Naive thymus-derived CD4-positive, alpha-beta T cell (primary cell): ENCODE measurements at regions of chr16 and their contacts with region 1.

Region 1: DNA sequence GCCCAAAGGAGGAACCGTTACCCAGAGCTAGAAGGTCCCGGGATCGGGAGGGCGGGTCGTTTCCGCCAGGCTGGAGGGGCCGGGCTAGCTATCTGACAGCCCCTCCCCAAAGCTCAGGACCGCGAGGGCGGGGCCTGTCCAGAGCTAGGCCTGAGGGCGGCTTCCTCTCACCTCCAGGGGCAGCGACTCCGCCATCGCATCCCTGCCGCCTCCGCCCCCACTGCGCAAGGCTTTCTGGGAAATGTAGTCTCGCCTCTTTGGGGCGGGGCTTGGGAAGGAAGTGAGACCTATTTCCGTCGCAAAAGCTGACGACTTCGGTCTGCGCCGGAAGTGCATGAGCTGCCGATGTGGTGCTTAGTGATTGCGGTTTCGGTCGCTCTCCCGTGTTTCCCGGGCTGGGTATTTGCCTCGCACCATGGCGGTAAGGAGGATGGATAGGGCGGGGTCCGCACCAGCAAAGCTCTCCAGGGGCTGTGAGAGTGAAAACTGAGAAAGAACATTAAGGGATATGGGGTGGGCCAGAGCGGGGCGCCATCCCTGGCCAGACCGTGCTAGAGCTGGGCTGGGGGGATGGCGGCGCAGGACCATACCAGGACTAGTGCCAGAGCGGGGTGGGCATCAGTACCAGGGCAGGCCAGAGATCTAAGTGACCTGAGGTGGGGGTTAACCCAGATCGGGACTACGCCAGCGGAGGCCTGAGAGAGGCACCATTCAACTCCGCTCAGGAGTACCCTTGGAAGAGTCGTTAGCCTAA is at the start of gene TMEM208:
- DNase-seq: peak; percentile 94 to 99 (median 97)
- ATAC-seq: peak; percentile 99
- H3K4me3 ChIP-seq: peak within 1 kb of the TSS; percentile 90
- H3K4me3 Mint-ChIP-seq: peak within 1 kb of the TSS; percentile 94 to 100 (median 98)
- H3K27ac ChIP-seq: peak within 1 kb of the TSS; percentile 85
- H3K27ac Mint-ChIP-seq: peak within 1 kb of the TSS; percentile 93 to 100 (median 99)
- H3K4me1 ChIP-seq: peaks cover 14 to 38% of the 10 kb centered on the region in 2 donors
- H3K4me1 Mint-ChIP-seq: peaks cover 37 to 62% (median 50%) of the 10 kb centered on the region in 7 donors
- H3K27me3 ChIP-seq: no peaks in the 10 kb centered on the region
- H3K27me3 Mint-ChIP-seq: no peaks in the 10 kb centered on the region
- total RNA-seq, gene TMEM208: 27.6 to 44.8 (median 32.7) TPM

Region 2: DNA sequence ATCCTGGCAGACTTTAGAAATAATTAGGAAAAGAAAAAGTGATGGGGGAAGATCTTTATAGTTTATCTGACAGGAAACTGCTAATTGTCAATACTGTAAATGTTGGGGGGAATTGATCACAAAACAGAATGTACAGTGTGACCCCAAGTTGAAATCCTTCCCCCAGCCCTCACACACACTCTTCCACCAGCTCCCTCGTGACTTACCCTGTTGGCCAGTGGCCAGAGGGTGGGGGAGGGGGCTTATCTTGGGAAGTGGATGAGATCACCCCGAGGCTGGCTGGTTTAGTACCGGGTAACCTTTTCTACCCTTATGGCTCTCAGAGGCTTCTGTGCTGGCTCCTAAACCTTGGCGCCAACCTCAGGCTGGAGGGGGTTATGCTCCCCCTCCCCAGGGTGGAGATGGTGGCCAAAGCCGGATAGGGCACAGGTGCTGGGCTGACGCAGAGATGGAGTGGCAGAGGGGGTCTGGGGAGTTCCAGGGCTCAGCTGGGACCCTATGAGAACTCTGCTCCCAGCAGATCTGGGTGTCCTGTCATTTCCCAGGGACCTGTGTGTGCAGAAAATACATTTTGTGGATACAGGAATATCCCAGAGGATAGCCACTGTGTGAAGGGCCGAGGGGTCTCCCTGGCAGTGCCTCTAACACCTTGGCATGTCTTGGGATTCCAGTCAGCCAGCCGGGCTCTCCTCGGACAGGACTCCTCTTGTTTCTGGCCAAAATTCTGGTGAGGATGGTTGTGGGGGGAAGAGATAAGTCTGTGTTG is 326.9 kb before region 1 on chr16:
- CTCF ChIA-PET with region 1: no interaction called
- POLR2A ChIA-PET with region 1: no interaction called
- intact Hi-C with region 1: no loop called
- DNase-seq: no peak
- ATAC-seq: no peak
- H3K4me3 ChIP-seq: no peak overlapping the region
- H3K4me3 Mint-ChIP-seq: no peak overlapping the region
- H3K27ac ChIP-seq: no peak overlapping the region
- H3K27ac Mint-ChIP-seq: no peak overlapping the region
- H3K4me1 ChIP-seq: peaks cover 0 to under 1% of the 10 kb centered on the region in 2 donors
- H3K4me1 Mint-ChIP-seq: peaks cover 0 to 7% (median 3%) of the 10 kb centered on the region in 7 donors
- H3K27me3 ChIP-seq: no peaks in the 10 kb centered on the region
- H3K27me3 Mint-ChIP-seq: no peaks in the 10 kb centered on the region

Region 3: GRCh38 chr16:66934153-66934838 is 292.7 kb before region 1 on chr16 and contains the start of gene CIAO2B:
- CTCF ChIA-PET with region 1: no interaction called
- POLR2A ChIA-PET with region 1: interaction called, 3 read pairs
- intact Hi-C with region 1: loop called in 1 of 2 experiments (anchors 1 kb)
- DNase-seq: peak; percentile 86 to 95 (median 91)
- ATAC-seq: peak; percentile 93
- H3K4me3 ChIP-seq: peak within 1 kb of the TSS; percentile 96
- H3K4me3 Mint-ChIP-seq: peak within 1 kb of the TSS; percentile 91 to 99 (median 98)
- H3K27ac ChIP-seq: peak within 1 kb of the TSS; percentile 97
- H3K27ac Mint-ChIP-seq: peak within 1 kb of the TSS; percentile 96 to 99 (median 98)
- H3K4me1 ChIP-seq: peaks cover 24 to 35% of the 10 kb centered on the region in 2 donors
- H3K4me1 Mint-ChIP-seq: peaks cover 38 to 63% (median 54%) of the 10 kb centered on the region in 7 donors
- H3K27me3 ChIP-seq: no peaks in the 10 kb centered on the region
- H3K27me3 Mint-ChIP-seq: no peaks in the 10 kb centered on the region
- total RNA-seq, gene CIAO2B: 47.0 to 116 (median 58.5) TPM

Region 4: DNA sequence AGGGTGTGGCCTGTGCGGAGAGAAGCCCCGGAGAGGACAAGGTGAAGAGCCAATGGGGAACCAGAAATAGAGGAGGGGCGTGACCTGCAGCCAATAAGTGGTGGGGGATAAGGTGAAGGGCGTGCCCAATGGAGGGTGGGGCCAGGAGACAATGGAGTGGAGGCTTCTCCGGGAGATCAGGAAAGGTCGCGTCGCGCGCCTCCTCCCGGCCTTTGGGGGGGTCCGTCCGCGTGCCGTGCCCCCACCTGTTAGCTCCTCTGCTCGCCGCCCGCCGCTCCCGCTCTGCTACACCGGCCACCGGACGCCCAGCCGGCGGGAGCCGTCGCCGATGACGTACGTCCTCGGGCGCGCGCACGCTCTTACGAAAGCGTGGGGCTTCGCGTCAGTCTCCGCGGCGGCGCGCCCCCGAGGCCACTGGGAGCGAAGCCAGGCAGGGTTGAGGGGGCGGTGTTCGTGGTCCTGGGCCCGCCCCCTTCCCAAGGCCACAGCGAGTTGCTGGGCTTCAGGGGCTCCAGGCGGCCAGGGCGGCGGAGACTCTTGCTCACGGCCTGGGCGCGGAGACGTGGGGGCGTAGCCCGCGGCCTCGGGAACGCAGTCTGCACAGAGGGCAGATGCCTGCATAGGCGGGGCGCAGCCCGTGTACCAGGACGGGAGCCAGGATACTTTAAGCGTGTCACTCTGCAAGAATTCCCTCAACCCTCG is 43.2 kb before region 1 on chr16 and contains the start of gene MATCAP1:
- CTCF ChIA-PET with region 1: no interaction called
- POLR2A ChIA-PET with region 1: interaction called, 6 read pairs
- intact Hi-C with region 1: loop called (anchors 1 to 2 kb)
- DNase-seq: peak; percentile 90 to 98 (median 96)
- ATAC-seq: peak; percentile 97
- H3K4me3 ChIP-seq: peak within 1 kb of the TSS; percentile 79
- H3K4me3 Mint-ChIP-seq: peak within 1 kb of the TSS in 5 of 10 donors; percentile 48 to 91 (median 86)
- H3K27ac ChIP-seq: peak within 1 kb of the TSS; percentile 97
- H3K27ac Mint-ChIP-seq: peak within 1 kb of the TSS in 2 of 9 donors; percentile 58 to 67
- H3K4me1 ChIP-seq: peaks cover 12 to 15% of the 10 kb centered on the region in 2 donors
- H3K4me1 Mint-ChIP-seq: peaks cover 8 to 24% (median 13%) of the 10 kb centered on the region in 7 donors
- H3K27me3 ChIP-seq: no peaks in the 10 kb centered on the region
- H3K27me3 Mint-ChIP-seq: peaks cover 4 to 15% (median 4%) of the 10 kb centered on the region in 5 donors
- total RNA-seq, gene MATCAP1: 4.3 to 88.1 (median 11.0) TPM

Region 5: DNA sequence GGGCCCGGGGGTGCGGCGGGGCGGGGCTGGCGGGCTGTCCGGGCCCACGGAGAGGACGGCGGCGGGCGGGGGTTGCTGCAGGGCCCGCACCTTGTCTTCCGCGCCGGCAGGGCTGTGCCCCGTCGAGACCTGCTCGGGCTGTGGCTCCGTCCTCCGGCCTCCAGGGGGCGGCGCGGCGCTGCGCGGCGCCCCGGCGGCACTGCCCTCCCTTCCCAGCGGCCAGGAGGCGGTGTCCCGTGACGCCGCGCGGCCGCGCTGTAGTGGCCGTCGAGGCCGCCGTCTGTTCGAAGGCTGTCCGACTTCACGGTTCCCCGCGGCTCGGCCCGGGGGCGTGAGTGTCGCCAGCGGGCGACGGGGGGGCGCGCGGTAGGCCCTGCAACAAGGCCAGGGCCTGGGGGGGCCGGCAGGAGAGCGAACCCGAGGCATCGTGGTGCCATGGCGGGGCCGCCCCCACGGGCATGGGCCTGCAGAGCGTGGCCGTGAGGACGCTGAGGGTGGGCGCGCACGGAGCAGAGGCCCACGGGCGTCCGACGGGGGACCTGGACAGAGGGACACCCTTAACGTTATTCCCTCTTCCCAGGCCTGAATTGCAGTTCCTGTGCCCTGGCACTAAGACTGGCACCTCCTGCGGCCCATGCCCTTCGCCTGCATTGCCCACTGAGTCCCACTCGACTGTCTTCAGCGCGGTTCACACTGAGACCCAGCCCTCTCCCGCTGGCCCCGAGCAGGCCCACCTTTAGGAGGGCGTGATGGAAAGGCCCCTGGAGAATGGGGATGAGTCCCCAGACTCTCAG is 52.5 kb after region 1 on chr16 and contains the start of gene PLEKHG4:
- CTCF ChIA-PET with region 1: no interaction called
- POLR2A ChIA-PET with region 1: no interaction called
- intact Hi-C with region 1: loop called (anchors 1 to 2 kb)
- DNase-seq: peak in 8 of 9 donors; percentile 61 to 79 (median 73)
- ATAC-seq: peak; percentile 98
- H3K4me3 ChIP-seq: peak within 1 kb of the TSS; percentile 70
- H3K4me3 Mint-ChIP-seq: peak within 1 kb of the TSS; percentile 74 to 90 (median 83)
- H3K27ac ChIP-seq: peak within 1 kb of the TSS; percentile 72
- H3K27ac Mint-ChIP-seq: peak within 1 kb of the TSS; percentile 62 to 93 (median 78)
- H3K4me1 ChIP-seq: peaks cover 9 to 27% of the 10 kb centered on the region in 2 donors
- H3K4me1 Mint-ChIP-seq: peaks cover 6 to 26% (median 21%) of the 10 kb centered on the region in 7 donors
- H3K27me3 ChIP-seq: no peaks in the 10 kb centered on the region
- H3K27me3 Mint-ChIP-seq: no peaks in the 10 kb centered on the region
- total RNA-seq, gene PLEKHG4: 18.9 to 32.3 (median 26.1) TPM

Region 6: GRCh38 chr16:67833418-67834241 is 606.6 kb after region 1 on chr16:
- CTCF ChIA-PET with region 1: no interaction called
- POLR2A ChIA-PET with region 1: no interaction called
- intact Hi-C with region 1: loop called in 1 of 2 experiments (anchors 5 kb)
- DNase-seq: peak; percentile 83 to 92 (median 89)
- ATAC-seq: peak; percentile 100
- H3K4me3 ChIP-seq: peak overlapping the region; percentile 82
- H3K4me3 Mint-ChIP-seq: peak overlapping the region; percentile 90 to 96 (median 93)
- H3K27ac ChIP-seq: peak overlapping the region; percentile 70
- H3K27ac Mint-ChIP-seq: peak overlapping the region; percentile 73 to 93 (median 82)
- H3K4me1 ChIP-seq: peaks cover 8 to 9% of the 10 kb centered on the region in 2 donors
- H3K4me1 Mint-ChIP-seq: peaks cover 11 to 19% (median 15%) of the 10 kb centered on the region in 7 donors
- H3K27me3 ChIP-seq: no peaks in the 10 kb centered on the region
- H3K27me3 Mint-ChIP-seq: no peaks in the 10 kb centered on the region